Vagina (tissue), 2 donors: ENCODE measurements at regions of chr1 and their contacts with region 1.

Region 1: DNA sequence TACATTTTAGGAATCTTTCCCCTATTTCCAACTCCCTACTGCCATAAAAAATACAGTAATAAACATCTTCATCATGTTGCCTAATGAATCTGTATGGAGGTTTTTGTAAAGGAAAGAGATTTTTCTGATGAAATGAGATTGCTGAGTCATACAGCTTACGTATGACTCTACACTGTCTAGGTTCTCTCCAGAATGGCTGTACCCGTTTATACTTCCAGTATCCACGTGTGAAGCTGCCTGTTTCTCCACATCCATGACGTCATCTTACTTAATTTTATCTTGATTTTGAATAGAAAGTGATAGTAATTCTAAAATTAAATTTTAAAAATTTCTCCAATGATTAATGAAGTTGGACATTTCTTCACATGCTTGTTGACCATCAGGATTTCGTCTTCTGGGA is 103.7 kb downstream of the COQ8A start:
- DNase-seq: no peak
- H3K4me3 ChIP-seq: no peak overlapping the region
- H3K27ac ChIP-seq: no peak overlapping the region
- H3K4me1 ChIP-seq: no peaks in the 10 kb centered on the region
- H3K27me3 ChIP-seq: no peaks in the 10 kb centered on the region
- CTCF ChIP-seq: no peak
- POLR2A ChIP-seq: no peak

Region 2: DNA sequence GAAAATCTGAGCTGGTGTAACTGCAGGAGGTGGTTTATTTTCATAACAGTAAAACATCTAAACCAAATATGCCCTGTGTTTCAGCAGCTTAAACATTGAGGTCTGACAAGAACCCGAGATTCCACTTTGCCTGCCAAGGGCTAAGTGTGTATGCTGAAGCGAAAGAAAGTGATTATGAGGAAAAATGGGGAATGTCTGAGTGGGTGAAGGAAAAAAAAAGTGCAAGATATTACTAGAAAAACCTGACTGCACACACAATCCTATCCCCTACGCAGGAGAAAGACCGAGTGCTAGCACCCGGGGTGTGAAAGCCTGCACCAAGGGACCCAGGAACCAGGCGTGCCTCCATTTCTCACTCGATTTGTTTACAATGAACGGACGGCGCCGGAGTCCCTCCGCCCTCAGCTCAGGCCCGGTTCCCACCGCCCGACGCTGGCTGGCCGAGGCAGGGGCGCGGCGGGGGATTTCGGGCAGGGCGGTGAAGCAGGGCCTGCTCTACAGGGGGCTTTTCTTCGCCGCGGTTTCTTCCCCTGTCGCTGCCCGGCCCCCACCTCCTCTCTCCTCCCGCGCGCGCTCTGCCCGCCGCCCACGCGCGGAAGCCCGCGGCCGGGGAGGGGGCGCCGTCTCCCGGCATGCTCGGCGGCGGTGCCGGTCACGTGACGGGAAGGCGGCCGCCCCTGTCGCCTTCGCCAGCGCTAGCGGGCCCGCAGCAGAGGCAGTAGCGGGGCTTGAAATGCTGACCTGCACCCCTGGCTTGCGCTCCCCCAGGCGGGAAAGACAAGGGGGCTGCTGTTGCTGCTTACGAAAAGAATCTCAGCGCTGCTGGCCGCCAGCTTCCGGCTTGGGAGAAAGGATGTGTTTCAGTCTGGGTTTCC is 340.6 kb before region 1 on chr1:
- intact Hi-C with region 1: no loop called
- DNase-seq: no peak
- H3K4me3 ChIP-seq: peak overlapping the region; percentile 55 to 79
- H3K27ac ChIP-seq: peak overlapping the region; percentile 95
- H3K4me1 ChIP-seq: peaks cover 57% of the 10 kb centered on the region
- H3K27me3 ChIP-seq: no peaks in the 10 kb centered on the region
- CTCF ChIP-seq: peak in 1 of 3 experiments; percentile 14
- POLR2A ChIP-seq: peak in 1 of 2 donors; percentile 63

Region 3: DNA sequence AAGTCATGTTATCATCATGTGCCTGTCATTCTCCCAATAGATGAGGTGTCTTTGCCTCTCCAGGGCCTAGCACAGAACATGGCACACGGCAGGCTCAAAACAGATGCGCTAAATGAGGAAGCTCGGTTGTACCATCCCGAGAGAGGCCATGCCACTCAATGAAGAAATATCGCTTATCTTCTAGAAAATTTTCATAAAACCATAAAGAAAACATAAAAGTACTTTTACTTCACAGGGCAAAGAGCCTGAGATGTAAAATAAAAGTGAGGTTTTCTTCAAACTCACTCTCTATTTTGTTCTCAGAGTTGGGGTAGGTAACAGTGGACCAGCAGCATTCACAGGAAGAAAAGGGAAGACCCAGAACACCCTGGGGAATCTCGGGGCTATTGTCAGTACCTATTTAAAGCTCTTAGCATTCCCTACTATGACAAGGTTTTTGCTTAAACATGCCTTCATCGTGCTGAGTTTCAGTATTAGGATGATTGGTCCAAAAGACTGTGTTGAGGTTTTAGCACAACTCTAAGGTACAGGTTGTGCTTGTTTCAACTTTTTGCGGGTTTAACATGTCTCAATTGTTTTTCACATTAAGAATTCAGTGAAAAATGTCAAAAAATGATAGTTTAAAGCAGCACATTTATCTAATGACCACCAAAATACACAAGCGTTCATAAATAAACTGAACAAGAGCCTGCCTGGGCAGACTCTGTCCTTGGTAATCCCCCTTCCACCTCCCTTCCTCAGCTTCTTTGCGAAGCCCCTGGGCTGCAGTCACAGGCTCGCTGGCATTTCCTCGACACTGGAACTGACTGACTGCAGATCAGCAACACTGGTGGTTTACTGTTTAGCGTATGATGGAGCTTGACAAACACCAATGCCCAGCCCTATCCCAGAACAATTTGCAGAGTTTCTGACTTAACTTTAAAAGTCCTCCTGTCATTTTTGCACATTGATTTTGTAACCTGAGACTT is 48.1 kb before region 1 on chr1:
- intact Hi-C with region 1: loop called (anchors 2 kb)
- DNase-seq: no peak
- H3K4me3 ChIP-seq: no peak overlapping the region
- H3K27ac ChIP-seq: no peak overlapping the region
- H3K4me1 ChIP-seq: no peaks in the 10 kb centered on the region
- H3K27me3 ChIP-seq: no peaks in the 10 kb centered on the region
- CTCF ChIP-seq: no peak
- POLR2A ChIP-seq: no peak